Common myeloid progenitor, CD34-positive (primary cell): ENCODE measurements at regions of chr17 and their contacts with region 1.

Region 1: GRCh38 chr17:21511363-21512198 is 135.4 kb downstream of the KCNJ12 start:
- DNase-seq: peak; percentile 61 to 76 (median 68)
- H3K4me3 ChIP-seq: peak overlapping the region; percentile 20 to 82 (median 57)
- H3K27ac ChIP-seq: no peak overlapping the region
- H3K4me1 ChIP-seq: peaks cover 0 to 31% (median 13%) of the 10 kb centered on the region in 4 experiments
- H3K27me3 ChIP-seq: peaks cover 0 to 12% (median 0%) of the 10 kb centered on the region in 5 experiments

Region 2: DNA sequence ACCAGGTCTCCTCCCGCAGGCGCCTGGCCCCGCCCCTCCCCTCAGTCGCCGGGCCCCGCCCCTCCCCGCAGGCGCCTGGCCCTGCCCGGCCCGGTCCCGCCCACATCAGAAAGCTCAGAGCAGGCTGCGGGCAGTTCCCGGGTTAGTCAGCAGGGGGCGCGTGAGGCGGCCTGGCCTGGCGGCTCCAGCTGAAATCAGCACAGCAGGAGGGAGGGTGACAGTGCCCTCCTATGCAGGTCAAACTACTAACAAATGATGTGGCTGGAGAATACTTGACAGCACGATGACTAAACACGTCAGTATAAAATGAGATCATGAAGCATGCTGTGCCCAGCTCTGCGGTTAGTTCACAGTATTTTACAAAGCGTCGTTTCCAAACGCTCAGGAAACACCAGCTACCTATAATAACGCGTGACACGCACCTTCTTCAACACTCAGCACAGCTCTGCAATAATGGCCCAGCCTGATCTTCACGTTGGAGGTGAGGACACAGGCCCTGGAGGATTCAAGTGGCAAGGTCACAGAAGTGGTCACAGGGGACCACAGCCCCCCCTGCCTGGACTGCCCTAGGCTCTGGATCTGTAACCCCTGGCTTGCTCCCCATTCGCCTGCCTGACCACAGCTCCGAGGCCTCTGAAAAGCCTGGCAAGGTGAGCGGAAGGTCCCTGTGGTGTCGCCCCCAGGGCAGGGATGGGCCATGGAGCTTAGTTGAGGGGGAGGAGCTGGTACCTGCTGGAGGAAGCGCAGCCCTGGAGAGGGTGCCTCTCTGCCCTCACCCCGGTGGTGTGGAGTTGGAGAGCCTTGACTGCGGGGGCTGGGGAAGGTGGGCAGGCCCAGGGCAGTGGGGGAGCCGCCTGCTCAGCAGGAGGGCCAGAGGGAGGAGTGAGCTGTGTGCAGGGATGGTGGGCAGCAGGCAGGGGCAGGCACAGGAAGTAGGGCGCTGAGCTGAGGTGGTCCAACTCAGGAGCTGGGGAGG is 54.2 kb before region 1 on chr17:
- CTCF ChIA-PET with region 1: interaction called, 84 read pairs
- POLR2A ChIA-PET with region 1: interaction called, 5 read pairs
- DNase-seq: peak; percentile 88 to 94 (median 92)
- H3K4me3 ChIP-seq: peak overlapping the region in 1 of 7 experiments; percentile 33
- H3K27ac ChIP-seq: no peak overlapping the region
- H3K4me1 ChIP-seq: peaks cover 0 to 14% (median 6%) of the 10 kb centered on the region in 4 experiments
- H3K27me3 ChIP-seq: peaks cover 0 to 4% (median 0%) of the 10 kb centered on the region in 5 experiments

Region 3: DNA sequence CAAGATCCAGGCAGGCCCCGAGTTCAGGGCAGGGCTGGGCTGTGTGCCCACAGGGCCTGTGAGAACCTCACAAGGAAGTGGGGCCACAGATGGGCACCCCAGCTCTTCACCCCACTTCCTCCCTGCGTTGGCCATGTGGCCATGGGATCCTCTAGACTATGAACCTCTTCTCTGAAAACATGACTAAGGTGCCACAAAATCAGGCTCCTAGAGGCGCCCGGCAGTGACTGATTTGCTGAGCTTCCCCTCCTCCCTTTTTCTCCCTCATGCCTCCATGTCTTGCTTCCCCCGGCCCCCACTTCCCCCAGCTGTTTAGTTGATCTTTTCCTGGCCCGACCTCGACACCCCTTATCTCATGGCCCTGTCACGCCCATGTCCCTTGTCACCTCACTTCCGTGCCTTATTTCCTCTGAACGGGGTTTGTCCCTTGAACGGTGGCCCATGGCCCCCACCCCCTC is 48.3 kb before region 1 on chr17:
- CTCF ChIA-PET with region 1: interaction called, 84 read pairs
- POLR2A ChIA-PET with region 1: no interaction called
- DNase-seq: peak; percentile 36 to 90 (median 84)
- H3K4me3 ChIP-seq: peak overlapping the region in 3 of 7 experiments; percentile 42 to 62 (median 48)
- H3K27ac ChIP-seq: no peak overlapping the region
- H3K4me1 ChIP-seq: peaks cover 0 to 22% (median 14%) of the 10 kb centered on the region in 4 experiments
- H3K27me3 ChIP-seq: peaks cover 0 to 4% (median 0%) of the 10 kb centered on the region in 5 experiments